ENCODE measurements at regions of chr1 and their contacts with region 1.

Region 1: DNA sequence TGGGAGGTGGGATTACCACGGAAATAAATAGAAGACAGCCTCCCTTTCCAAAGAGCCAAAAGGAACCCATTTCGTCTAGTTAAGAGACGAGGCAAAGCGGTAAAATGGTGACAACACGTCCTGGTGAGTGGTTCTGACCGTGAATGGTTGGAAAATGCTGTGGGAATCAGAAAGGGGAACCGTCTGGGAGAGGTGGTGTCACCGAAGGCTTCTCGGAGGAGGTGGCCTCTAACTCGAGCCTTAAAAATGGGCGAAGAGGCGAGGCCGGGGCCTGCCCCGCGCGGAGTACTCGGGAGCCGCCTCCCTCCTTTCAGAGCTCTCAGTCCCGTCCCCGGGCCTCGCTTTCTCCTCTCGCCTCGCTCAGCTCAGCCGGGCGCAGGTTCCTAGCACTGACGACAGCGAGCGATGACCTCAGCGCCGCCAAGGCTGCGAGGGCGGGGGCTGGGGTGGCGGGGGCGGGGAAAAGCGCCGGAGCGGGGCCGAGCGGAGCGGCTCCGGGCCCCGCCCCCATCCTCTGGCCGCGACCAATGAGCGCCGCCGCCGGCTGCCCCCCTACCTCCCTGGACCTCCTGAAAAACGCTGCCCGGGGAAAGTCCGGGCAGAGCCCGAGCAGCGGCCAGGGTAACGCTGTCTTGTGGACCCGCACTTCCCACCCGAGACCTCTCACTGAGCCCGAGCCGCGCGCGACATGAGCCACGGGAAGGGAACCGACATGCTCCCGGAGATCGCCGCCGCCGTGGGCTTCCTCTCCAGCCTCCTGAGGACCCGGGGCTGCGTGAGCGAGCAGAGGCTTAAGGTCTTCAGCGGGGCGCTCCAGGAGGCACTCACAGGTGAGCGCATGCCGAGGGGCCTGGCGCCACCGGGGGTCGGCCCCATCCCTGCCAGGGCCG is at the start of gene BTG2:
- DNase-seq: peak; percentile 93
- H3K4me3 Mint-ChIP-seq: peak within 1 kb of the TSS; percentile 98
- H3K27ac Mint-ChIP-seq: peak within 1 kb of the TSS; percentile 92
- H3K4me1 Mint-ChIP-seq: peaks cover 68% of the 10 kb centered on the region
- H3K27me3 Mint-ChIP-seq: no peaks in the 10 kb centered on the region
- total RNA-seq, gene BTG2: 116 TPM

Region 2: DNA sequence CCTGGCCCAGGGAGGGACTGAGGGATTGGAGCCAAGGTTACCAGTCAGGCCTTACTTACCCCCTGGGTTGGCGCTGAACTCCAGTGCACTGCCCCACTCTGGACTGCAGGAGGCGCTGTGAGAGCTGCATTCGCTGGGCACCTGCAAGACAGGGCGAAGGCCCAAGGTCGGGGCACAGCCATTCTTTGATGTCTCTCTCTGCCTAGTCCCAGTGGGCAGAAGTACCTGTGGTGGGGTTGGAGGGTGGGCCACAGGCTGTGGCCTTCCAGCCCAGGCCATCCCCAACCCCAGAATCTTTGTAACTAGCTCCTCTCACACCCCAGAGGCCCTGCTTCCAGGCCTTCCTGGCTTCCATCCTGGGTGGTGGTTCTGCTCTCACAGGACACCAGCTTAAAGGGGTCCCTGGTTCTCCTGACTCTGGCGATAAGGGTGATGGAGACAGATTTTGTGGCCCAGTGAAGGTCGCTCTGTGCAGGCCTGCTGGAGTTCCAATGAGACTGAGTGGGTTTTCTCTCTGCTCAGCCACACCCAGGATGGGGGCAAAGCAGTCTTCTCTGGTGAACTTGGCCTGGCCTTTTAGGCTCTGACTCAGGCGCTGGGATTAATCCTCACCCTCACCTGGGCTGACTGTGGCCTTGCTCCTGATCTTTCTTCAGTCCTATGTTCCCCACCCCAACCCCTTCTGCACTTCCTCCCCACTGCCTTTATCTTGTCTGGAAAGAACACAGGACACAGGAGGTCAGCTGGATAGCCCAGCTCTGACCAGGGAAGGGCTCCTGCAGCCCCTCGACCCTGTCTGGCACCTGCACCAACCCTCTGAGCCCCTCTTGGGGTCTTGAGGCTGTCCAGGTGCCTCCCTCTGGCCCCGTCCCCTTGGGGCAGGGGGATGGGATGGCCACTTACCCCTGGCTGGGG is 220.3 kb before region 1 on chr1:
- CTCF ChIA-PET with region 1: no interaction called
- POLR2A ChIA-PET with region 1: no interaction called
- DNase-seq: peak; percentile 45
- H3K4me3 Mint-ChIP-seq: no peak overlapping the region
- H3K27ac Mint-ChIP-seq: no peak overlapping the region
- H3K4me1 Mint-ChIP-seq: no peaks in the 10 kb centered on the region
- H3K27me3 Mint-ChIP-seq: peaks cover 14% of the 10 kb centered on the region

Region 3: GRCh38 chr1:203290261-203291089 is 14.7 kb before region 1 on chr1:
- CTCF ChIA-PET with region 1: interaction called, 85 read pairs
- POLR2A ChIA-PET with region 1: interaction called, 646 read pairs
- DNase-seq: peak; percentile 98
- H3K4me3 Mint-ChIP-seq: peak overlapping the region; percentile 76
- H3K27ac Mint-ChIP-seq: peak overlapping the region; percentile 100
- H3K4me1 Mint-ChIP-seq: peaks cover 73% of the 10 kb centered on the region
- H3K27me3 Mint-ChIP-seq: no peaks in the 10 kb centered on the region

Region 4: GRCh38 chr1:203320591-203321272 is 15.6 kb after region 1 on chr1:
- CTCF ChIA-PET with region 1: interaction called, 146 read pairs
- POLR2A ChIA-PET with region 1: interaction called, 433 read pairs
- DNase-seq: peak; percentile 83
- H3K4me3 Mint-ChIP-seq: peak overlapping the region; percentile 38
- H3K27ac Mint-ChIP-seq: peak overlapping the region; percentile 83
- H3K4me1 Mint-ChIP-seq: peaks cover 70% of the 10 kb centered on the region
- H3K27me3 Mint-ChIP-seq: peaks cover 3% of the 10 kb centered on the region

Region 5: DNA sequence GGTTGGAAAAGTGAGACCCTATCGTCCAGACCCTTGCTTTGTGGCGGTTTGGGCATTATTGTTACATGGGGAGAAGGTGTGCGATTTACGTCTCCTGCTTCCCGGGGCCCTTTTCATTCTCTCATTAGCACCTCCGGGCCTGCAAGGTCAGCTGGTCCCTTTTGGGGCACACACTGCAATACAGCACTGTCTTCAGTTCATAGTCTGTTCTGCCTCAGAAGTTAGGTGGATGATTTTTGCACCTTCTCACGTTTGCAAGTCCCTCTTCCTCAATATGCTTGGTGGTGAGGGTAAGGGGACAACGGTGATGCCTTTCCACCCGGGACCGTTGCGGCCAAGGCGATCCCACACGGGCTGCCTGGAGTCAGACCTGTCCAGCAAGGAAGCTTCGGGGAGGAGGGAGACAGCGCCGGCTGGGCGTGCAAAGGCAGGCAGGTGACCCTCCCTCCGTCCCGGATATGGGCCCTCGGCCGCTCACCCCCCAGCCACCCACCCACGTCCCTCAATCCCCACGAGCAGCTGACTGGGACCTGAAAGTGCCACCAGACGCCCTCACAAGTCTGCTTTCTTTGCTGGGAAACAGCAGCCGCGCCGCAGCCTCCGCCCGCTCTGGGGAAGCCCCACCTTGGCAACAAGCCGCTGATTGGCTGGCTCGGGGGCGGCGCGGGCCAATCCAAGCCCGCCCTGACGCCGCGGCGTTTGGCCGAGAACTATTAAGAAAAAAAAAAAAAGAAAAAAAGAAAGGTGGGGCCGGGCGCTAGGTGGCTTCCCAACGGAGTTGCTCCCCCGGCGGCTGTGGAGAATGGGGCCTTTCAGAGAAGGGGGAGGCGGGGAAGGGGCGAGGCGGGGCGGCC is 21.9 kb after region 1 on chr1:
- CTCF ChIA-PET with region 1: interaction called, 146 read pairs
- POLR2A ChIA-PET with region 1: interaction called, 433 read pairs
- DNase-seq: peak; percentile 95
- H3K4me3 Mint-ChIP-seq: peak overlapping the region; percentile 75
- H3K27ac Mint-ChIP-seq: peak overlapping the region; percentile 95
- H3K4me1 Mint-ChIP-seq: peaks cover 65% of the 10 kb centered on the region
- H3K27me3 Mint-ChIP-seq: no peaks in the 10 kb centered on the region

Measured in activated CD4-positive, alpha-beta memory T cell treated with anti-CD3 and anti-CD28 coated beads, Interleukin-2, amount 10 ng/mL, durations not matched to agents 7 days and 5 days (primary cell).